ENCODE measurements at regions of chr2 and their contacts with region 1.

Region 1: DNA sequence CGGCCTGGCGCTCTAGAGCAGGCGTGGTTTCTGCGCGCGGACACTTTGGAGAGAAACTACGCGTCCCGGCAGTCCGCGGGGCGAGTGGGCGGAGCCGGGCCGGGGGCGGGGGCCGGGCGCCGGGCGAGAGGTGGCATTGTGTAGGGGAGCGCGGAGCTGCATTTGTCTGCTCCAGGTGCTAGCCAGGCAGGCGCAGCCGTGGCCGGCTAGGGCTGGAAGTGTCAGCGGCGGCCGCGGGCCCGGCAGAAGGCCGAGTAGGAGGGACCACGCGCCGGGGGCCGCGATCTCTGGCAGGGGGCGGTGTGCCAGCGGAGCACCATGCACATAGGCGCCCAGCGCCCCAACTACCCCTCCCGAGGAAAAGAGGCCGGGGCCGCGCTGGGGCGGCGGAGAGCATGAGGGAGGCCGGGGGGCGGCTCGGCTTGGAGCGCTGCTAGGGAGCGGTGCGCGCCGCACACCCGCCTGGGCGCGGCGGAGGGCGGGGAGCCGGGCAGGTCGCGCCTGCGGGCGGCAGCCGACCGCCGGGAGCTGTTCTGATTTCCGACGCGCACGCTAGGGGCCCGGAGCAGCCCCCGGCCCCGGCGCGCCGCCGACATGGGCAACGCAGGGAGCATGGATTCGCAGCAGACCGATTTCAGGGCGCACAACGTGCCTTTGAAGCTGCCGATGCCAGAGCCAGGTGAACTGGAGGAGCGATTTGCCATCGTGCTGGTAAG is at the start of gene FMNL2:
- DNase-seq: peak; percentile 65
- ATAC-seq: peak; percentile 91
- H3K4me3 ChIP-seq: peak within 1 kb of the TSS; percentile 98
- H3K27ac ChIP-seq: peak within 1 kb of the TSS; percentile 63
- H3K4me1 ChIP-seq: peaks cover 2% of the 10 kb centered on the region; the same call in 1 of the 2 replicates
- H3K27me3 ChIP-seq: no peaks in the 10 kb centered on the region
- CTCF ChIP-seq: no peak
- POLR2A ChIP-seq: peak; percentile 56; the same call in 1 of the 2 replicates
- RAD21 ChIP-seq: 0 out of 2 replicates have a peak, but pooled peaks have one; percentile 10
- total RNA-seq, gene FMNL2: 10.9 and 15.6 TPM in 2 replicates

Region 2: DNA sequence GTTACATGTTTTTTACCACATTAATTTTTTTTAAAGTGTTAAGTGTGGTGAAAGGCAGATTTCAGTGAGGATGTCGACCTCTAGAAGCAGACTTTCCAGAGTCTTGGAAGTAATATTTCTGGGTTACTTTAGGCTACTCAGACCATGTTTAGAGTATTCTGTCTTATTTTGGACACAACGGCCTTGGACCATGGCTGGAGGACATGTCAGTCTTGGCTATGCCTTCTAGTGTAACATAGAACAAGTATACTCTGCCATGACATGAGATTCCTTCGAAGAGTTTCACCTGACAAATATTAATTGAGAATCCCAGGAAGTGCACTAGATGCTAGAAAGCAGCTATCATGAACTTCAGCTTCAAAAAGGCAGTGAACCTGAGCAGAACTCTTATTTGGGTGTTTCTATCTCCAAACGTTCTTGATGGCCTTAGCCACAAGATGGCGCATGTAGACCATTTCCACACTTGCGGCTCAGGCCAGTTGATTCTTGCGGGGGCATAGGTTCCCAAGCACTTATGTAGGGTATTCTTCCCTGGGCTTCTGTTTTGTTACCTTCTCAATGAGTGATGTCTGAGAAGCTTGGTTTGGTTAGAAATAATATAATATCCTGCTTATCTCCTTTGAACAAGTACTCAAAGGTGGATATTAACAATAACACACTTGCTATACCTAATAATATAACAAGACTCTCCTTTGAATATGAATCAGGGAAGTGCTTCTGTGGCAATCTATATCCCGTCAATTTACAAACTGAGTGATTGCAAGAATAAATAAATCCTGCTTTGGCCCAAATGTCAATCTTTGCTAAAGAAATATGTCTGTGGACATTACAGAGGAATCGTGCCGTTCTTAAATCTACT is 298.3 kb before region 1 on chr2:
- CTCF ChIA-PET with region 1: no interaction called
- POLR2A ChIA-PET with region 1: no interaction called
- dilution Hi-C with region 1: no loop called
- in situ Hi-C with region 1: no loop called
- intact Hi-C with region 1: loop called (anchors 2 kb)
- DNase-seq: peak; percentile 71
- ATAC-seq: peak; percentile 97
- H3K4me3 ChIP-seq: no peak overlapping the region
- H3K27ac ChIP-seq: no peak overlapping the region
- H3K4me1 ChIP-seq: no peaks in the 10 kb centered on the region; the same call in 1 of the 2 replicates
- H3K27me3 ChIP-seq: peaks cover 22% of the 10 kb centered on the region
- CTCF ChIP-seq: peak; percentile 87
- POLR2A ChIP-seq: no peak
- RAD21 ChIP-seq: peak; percentile 86

Region 3: GRCh38 chr2:152200562-152201465 is 134.4 kb before region 1 on chr2:
- CTCF ChIA-PET with region 1: no interaction called
- POLR2A ChIA-PET with region 1: interaction called, 4 read pairs
- dilution Hi-C with region 1: no loop called
- in situ Hi-C with region 1: loop called (anchors 5 kb)
- intact Hi-C with region 1: no loop called
- DNase-seq: peak; percentile 98
- ATAC-seq: peak; percentile 100
- H3K4me3 ChIP-seq: no peak overlapping the region; the same call in 1 of the 2 replicates
- H3K27ac ChIP-seq: peak overlapping the region; percentile 72
- H3K4me1 ChIP-seq: no peaks in the 10 kb centered on the region
- H3K27me3 ChIP-seq: no peaks in the 10 kb centered on the region
- CTCF ChIP-seq: no peak
- POLR2A ChIP-seq: peak; percentile 37; the same call in 1 of the 2 replicates
- RAD21 ChIP-seq: peak; percentile 22

Region 4: GRCh38 chr2:152456262-152456661 is 121.1 kb after region 1 on chr2:
- CTCF ChIA-PET with region 1: no interaction called
- POLR2A ChIA-PET with region 1: no interaction called
- dilution Hi-C with region 1: no loop called
- in situ Hi-C with region 1: no loop called
- intact Hi-C with region 1: no loop called
- DNase-seq: peak; percentile 20
- ATAC-seq: no peak
- H3K4me3 ChIP-seq: no peak overlapping the region
- H3K27ac ChIP-seq: no peak overlapping the region
- H3K4me1 ChIP-seq: no peaks in the 10 kb centered on the region
- H3K27me3 ChIP-seq: no peaks in the 10 kb centered on the region
- CTCF ChIP-seq: no peak
- POLR2A ChIP-seq: no peak
- RAD21 ChIP-seq: no peak

Region 5: DNA sequence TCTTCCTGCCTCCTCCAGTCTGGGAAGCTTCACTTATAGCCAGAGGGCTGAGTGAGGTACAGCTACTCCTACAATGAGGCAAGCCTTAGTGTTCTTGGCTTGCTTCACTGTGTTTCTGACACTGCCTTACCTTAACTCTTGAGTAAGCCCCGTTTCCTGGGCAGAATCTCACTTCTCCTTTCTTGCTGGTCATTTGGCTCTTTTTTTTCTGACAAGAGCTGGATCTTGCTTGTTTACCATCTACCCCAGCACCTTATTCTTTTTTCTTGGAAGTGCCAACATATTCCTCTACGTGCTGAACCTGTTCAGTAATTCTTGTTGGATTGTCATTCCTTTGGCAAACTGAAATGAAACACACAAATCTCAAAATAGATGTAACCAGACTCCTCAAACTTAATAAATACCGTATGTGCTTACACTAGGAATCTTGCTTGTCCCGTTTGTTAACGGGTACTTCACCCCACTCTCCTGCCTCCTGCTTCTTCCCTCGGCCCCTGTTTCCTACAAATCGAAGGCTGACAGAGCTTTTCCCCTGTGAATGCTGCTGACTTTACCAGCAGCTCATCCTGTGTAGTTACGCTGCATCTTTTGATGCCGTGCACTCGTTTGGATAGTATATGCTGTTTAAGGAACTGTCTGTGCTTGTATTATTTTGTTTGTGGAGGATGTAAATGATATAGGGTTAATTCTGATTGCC is 132.0 kb after region 1 on chr2:
- CTCF ChIA-PET with region 1: no interaction called
- POLR2A ChIA-PET with region 1: no interaction called
- dilution Hi-C with region 1: no loop called
- in situ Hi-C with region 1: no loop called
- intact Hi-C with region 1: loop called (anchors 5 kb)
- DNase-seq: peak; percentile 45
- ATAC-seq: no peak
- H3K4me3 ChIP-seq: no peak overlapping the region
- H3K27ac ChIP-seq: no peak overlapping the region
- H3K4me1 ChIP-seq: peaks cover 18% of the 10 kb centered on the region
- H3K27me3 ChIP-seq: no peaks in the 10 kb centered on the region
- CTCF ChIP-seq: no peak
- POLR2A ChIP-seq: no peak
- RAD21 ChIP-seq: no peak

Region 6: DNA sequence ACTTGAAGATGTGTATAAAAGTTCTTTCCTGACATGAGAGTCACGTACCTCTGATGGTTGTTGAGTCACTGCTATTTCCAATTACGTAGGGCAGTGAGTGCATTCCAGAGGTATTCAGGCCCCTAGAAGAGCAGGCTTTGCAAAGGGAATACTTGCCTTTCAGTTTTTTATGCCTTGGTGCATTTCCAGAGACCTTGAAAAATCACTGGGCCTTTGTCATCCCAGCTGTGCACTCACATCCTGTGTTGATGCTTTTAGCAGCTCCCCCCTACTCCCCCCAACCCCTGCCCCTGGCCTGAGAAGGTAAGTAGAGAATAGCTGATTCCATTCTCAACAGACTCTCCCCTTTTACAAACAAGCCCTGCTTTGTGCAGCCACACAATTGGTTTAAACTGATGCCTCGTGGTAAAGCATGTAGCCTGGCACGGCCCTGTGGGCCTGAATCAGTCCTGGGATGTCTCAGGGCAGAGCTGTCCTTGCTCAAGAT is 207.9 kb after region 1 on chr2:
- CTCF ChIA-PET with region 1: no interaction called
- POLR2A ChIA-PET with region 1: no interaction called
- dilution Hi-C with region 1: no loop called
- in situ Hi-C with region 1: no loop called
- intact Hi-C with region 1: loop called (anchors 5 kb)
- DNase-seq: peak; percentile 100
- ATAC-seq: peak; percentile 95
- H3K4me3 ChIP-seq: no peak overlapping the region
- H3K27ac ChIP-seq: peak overlapping the region; percentile 94
- H3K4me1 ChIP-seq: peaks cover 18% of the 10 kb centered on the region
- H3K27me3 ChIP-seq: no peaks in the 10 kb centered on the region
- CTCF ChIP-seq: no peak
- POLR2A ChIP-seq: no peak
- RAD21 ChIP-seq: 0 out of 2 replicates have a peak, but pooled peaks have one; percentile 3

Region 7: DNA sequence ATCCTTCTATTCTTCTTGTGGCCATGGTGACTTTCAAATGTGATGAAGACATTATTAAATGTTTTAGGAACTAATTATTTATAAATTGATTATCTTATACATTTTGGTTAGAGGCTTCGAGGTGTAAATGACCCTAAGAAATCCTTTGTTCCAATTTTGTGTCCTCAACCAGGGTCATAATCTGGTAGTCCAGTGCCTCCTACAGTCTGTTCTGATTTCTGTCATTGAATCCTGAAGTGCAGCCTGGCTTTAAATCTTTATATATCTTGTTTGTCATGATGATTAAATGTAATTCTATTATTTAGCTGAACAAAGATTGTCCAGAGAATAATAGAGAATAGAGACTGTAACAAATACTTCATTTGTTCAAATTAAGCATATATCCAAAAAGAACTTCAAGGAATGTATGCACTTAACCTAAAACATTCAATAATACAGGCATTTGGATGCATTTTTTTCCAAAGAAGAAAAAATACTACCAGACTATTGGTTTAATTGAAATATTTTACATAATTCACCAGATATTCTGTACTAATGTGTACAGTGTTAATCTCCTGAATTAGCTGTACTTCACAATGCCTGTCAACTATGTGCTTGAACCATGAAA is 292.3 kb after region 1 on chr2:
- CTCF ChIA-PET with region 1: interaction called, 3 read pairs
- POLR2A ChIA-PET with region 1: no interaction called
- dilution Hi-C with region 1: no loop called
- in situ Hi-C with region 1: loop called (anchors 10 kb)
- intact Hi-C with region 1: loop called (anchors 1 kb)
- DNase-seq: peak; percentile 55
- ATAC-seq: peak; percentile 82
- H3K4me3 ChIP-seq: no peak overlapping the region
- H3K27ac ChIP-seq: no peak overlapping the region
- H3K4me1 ChIP-seq: no peaks in the 10 kb centered on the region
- H3K27me3 ChIP-seq: no peaks in the 10 kb centered on the region
- CTCF ChIP-seq: peak; percentile 76
- POLR2A ChIP-seq: no peak
- RAD21 ChIP-seq: peak; percentile 87

Measured in IMR-90 (cell line).